ENCODE measurements at regions of chr2 and their contacts with region 1.

Region 1: GRCh38 chr2:189661148-189661956 is at the start of gene ASNSD1:
- DNase-seq: peak; percentile 100
- H3K4me3 ChIP-seq: peak within 1 kb of the TSS; percentile 100
- H3K27ac ChIP-seq: peak within 1 kb of the TSS; percentile 54
- H3K27me3 ChIP-seq: no peaks in the 10 kb centered on the region
- CTCF ChIP-seq: peak; percentile 94
- polyA plus RNA-seq, gene ASNSD1: 38.3 and 50.1 TPM in 2 replicates

Region 2: GRCh38 chr2:189628817-189629530 is 32.4 kb before region 1 on chr2:
- CTCF ChIA-PET with region 1: interaction called, 15 read pairs
- POLR2A ChIA-PET with region 1: no interaction called
- DNase-seq: no peak
- H3K4me3 ChIP-seq: no peak overlapping the region
- H3K27ac ChIP-seq: no peak overlapping the region
- H3K27me3 ChIP-seq: no peaks in the 10 kb centered on the region
- CTCF ChIP-seq: no peak

Region 3: GRCh38 chr2:189674374-189675112 is 13.2 kb after region 1 on chr2 and contains the start of gene ANKAR:
- CTCF ChIA-PET with region 1: interaction called, 114 read pairs
- POLR2A ChIA-PET with region 1: interaction called, 3 read pairs
- DNase-seq: peak; percentile 70
- H3K4me3 ChIP-seq: peak within 1 kb of the TSS; percentile 72
- H3K27ac ChIP-seq: peak within 1 kb of the TSS; percentile 93
- H3K27me3 ChIP-seq: no peaks in the 10 kb centered on the region
- CTCF ChIP-seq: peak; percentile 71
- polyA plus RNA-seq, gene ANKAR: 1.9 and 3.5 TPM in 2 replicates

Region 4: DNA sequence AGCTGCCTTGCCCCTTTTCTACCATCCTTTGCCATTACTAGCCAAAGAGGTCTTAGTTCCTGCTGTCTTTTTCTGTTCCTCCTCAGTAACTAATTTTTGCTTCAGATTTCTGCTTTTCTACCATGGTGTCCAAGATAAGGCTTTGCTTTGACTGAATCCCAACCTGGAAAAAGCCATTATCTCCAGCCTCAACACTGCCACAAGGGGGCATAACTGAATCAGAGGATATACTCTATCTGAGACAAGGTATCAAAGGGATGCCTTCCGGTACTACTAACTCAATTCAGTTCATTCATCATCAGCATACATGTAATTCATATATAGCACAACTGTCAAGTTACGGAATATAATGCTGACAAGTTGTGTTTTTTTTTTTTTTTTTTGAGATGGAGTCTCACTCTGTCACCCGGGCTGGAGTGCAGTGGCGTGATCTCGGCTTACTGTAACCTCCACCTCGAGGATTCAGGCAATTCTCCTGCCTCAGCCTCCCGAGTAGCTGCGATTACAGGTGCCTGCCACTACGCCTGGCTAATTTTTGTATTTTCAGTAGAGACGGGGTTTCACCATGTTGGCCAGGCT is 89.8 kb after region 1 on chr2:
- CTCF ChIA-PET with region 1: interaction called, 10 read pairs
- POLR2A ChIA-PET with region 1: no interaction called
- DNase-seq: no peak
- H3K4me3 ChIP-seq: no peak overlapping the region
- H3K27ac ChIP-seq: no peak overlapping the region
- H3K27me3 ChIP-seq: no peaks in the 10 kb centered on the region
- CTCF ChIP-seq: peak; percentile 82

Region 5: DNA sequence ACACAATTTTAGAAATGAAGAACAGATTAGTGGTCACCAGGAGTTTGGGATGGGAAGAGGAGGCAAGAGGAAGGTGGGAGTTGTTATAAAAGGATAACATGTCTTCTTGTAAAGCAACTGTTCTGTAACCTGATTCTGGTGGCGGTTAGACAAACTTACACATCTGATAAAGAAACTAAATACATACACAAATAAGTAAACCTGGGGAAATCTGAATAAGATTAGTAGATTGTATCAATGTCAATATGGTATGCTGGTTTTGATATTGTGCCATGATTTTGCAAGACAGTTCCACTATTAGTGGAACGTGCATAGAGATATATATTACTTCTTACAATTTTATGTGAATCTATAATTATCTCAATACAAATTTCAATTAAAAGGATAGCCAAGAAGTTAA is 305.1 kb after region 1 on chr2:
- CTCF ChIA-PET with region 1: interaction called, 13 read pairs
- POLR2A ChIA-PET with region 1: no interaction called
- DNase-seq: no peak
- H3K4me3 ChIP-seq: no peak overlapping the region
- H3K27ac ChIP-seq: no peak overlapping the region
- H3K27me3 ChIP-seq: no peaks in the 10 kb centered on the region
- CTCF ChIP-seq: no peak

Region 6: DNA sequence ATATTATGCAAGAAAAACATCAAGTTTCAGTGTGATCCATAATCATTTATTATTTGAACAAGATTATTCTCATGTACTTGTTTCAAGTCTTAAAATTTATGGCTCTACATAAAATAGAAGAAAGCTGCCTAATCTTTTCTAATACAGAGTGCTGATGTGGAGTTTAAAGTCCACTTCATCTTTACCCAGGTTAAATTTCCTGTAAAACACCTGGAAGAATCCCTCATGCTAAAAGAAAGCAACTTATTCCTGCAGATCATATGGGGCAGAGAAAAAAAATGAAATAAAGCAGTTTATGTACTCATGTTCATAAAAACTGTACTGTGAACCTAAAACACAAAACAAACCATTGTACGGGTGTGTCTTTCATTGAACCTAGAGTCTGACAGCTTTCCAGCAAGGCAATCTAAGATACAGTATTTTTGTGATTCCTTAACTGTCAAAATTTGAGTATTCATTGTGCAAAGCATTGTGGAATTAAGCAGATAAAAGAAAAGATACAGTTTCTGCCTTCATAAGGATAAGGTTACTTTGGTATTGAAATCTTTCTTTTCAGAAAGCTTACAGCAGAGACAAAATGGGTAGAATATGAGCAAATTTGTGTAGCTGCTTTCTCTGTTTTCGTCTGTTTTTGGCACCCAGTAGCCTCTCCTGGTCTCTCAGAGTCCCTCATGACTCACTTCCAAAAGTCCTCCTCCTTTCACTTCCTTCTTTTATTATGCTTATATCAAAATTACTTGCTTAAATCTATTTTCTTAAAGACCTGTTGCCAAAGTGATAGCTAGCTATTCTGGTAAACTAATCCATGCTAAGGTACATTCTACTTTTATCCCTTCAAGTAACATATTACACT is 1192.4 kb after region 1 on chr2:
- CTCF ChIA-PET with region 1: no interaction called
- POLR2A ChIA-PET with region 1: no interaction called
- DNase-seq: no peak
- H3K4me3 ChIP-seq: no peak overlapping the region
- H3K27ac ChIP-seq: no peak overlapping the region
- H3K27me3 ChIP-seq: no peaks in the 10 kb centered on the region
- CTCF ChIP-seq: no peak

Measured in AG04450 (cell line).